ENCODE measurements at regions of chr5 and their contacts with region 1.

Region 1: DNA sequence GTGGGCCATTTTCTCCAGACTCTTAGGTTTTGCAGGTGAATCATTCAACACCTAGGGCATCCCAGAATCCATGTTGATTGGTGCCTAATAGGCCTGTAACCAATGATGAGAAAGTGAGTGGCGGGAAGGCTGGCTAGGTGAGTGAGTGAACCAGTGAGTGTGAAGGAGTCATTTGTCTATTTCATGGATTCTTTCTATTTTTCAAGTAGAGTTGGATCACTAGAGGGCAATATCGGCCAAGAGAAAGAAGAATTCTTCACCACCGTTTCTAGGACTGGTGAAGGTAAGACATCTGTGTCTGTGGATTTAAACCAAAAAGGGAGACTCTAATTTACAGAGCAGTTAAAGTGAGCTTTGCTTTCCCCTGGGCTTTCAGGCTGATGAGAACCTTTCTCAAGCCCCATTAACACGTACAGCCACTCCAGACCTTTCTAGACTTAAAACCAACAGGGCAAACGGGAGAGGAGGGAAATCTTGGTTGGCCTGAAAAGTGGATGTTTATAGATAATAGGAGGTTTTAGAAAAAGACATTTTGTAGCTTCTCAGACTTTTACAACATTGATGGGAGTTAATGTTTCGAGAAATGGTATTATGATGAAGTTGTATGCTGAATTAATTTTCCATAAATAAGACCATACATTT is 114.3 kb upstream of the IL12B start:
- DNase-seq: no peak
- ATAC-seq: peak; percentile 56
- H3K4me3 ChIP-seq: no peak overlapping the region
- H3K27ac ChIP-seq: no peak overlapping the region
- H3K4me1 ChIP-seq: no peaks in the 10 kb centered on the region
- H3K27me3 ChIP-seq: no peaks in the 10 kb centered on the region
- CTCF ChIP-seq: peak; percentile 3 to 65 (median 27); a peak in 3 of 6 replicates
- EP300 ChIP-seq: no peak
- POLR2A ChIP-seq: no peak
- RAD21 ChIP-seq: peak; percentile 77

Region 2: GRCh38 chr5:159061179-159061796 is 383.3 kb before region 1 on chr5:
- CTCF ChIA-PET with region 1: no interaction called
- POLR2A ChIA-PET with region 1: no interaction called
- RAD21 ChIA-PET with region 1: no interaction called
- SMC1A ChIA-PET with region 1: no interaction called
- in situ Hi-C with region 1: no loop called
- intact Hi-C with region 1: no loop called
- DNase-seq: no peak
- ATAC-seq: peak; percentile 39
- H3K4me3 ChIP-seq: no peak overlapping the region
- H3K27ac ChIP-seq: no peak overlapping the region
- H3K4me1 ChIP-seq: peaks cover 12% of the 10 kb centered on the region; the same call in 1 of the 2 replicates
- H3K27me3 ChIP-seq: no peaks in the 10 kb centered on the region
- CTCF ChIP-seq: no peak
- EP300 ChIP-seq: no peak
- POLR2A ChIP-seq: no peak
- RAD21 ChIP-seq: no peak

Region 3: GRCh38 chr5:159149085-159149484 is 295.5 kb before region 1 on chr5:
- CTCF ChIA-PET with region 1: no interaction called
- POLR2A ChIA-PET with region 1: no interaction called
- RAD21 ChIA-PET with region 1: no interaction called
- SMC1A ChIA-PET with region 1: no interaction called
- in situ Hi-C with region 1: no loop called
- intact Hi-C with region 1: no loop called
- DNase-seq: no peak
- ATAC-seq: no peak
- H3K4me3 ChIP-seq: no peak overlapping the region
- H3K27ac ChIP-seq: no peak overlapping the region
- H3K4me1 ChIP-seq: no peaks in the 10 kb centered on the region
- H3K27me3 ChIP-seq: no peaks in the 10 kb centered on the region
- CTCF ChIP-seq: no peak
- EP300 ChIP-seq: no peak
- POLR2A ChIP-seq: no peak
- RAD21 ChIP-seq: no peak

Region 4: DNA sequence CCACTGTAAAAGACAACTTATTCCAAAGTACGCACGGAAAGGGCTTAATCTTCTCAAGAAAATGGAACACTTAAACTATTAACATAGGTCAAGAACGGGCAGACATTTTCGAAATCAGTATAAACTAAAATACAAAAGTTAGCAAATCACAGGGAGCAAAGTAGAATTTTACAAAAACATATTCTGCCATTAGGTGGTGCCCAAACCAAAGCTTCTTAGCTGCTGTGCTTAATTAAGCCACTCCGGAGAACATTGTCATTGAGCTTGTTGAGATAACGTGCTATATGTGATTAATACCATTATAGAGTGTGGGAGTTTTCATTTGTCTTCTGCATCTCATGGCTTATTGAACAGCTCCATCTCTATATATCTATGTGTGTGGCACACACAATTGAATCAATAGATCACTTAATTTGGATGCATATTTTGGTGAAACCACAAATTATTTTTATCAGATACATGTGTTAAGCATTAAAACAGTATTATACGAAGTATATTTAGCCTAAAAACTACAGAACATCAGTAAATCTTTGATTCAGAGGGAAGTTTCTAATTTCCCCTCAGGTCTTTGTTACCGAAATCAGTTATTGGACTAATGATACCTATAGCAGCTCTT is 158.0 kb before region 1 on chr5:
- CTCF ChIA-PET with region 1: interaction called, 5 read pairs
- POLR2A ChIA-PET with region 1: no interaction called
- RAD21 ChIA-PET with region 1: no interaction called
- SMC1A ChIA-PET with region 1: interaction called, 6 read pairs
- in situ Hi-C with region 1: no loop called
- intact Hi-C with region 1: loop called (anchors 1 kb)
- DNase-seq: no peak
- ATAC-seq: peak; percentile 56
- H3K4me3 ChIP-seq: no peak overlapping the region
- H3K27ac ChIP-seq: no peak overlapping the region
- H3K4me1 ChIP-seq: no peaks in the 10 kb centered on the region
- H3K27me3 ChIP-seq: no peaks in the 10 kb centered on the region
- CTCF ChIP-seq: peak; percentile 30 to 52 (median 36); a peak in 4 of 6 replicates
- EP300 ChIP-seq: no peak
- POLR2A ChIP-seq: no peak
- RAD21 ChIP-seq: peak; percentile 70

Region 5: DNA sequence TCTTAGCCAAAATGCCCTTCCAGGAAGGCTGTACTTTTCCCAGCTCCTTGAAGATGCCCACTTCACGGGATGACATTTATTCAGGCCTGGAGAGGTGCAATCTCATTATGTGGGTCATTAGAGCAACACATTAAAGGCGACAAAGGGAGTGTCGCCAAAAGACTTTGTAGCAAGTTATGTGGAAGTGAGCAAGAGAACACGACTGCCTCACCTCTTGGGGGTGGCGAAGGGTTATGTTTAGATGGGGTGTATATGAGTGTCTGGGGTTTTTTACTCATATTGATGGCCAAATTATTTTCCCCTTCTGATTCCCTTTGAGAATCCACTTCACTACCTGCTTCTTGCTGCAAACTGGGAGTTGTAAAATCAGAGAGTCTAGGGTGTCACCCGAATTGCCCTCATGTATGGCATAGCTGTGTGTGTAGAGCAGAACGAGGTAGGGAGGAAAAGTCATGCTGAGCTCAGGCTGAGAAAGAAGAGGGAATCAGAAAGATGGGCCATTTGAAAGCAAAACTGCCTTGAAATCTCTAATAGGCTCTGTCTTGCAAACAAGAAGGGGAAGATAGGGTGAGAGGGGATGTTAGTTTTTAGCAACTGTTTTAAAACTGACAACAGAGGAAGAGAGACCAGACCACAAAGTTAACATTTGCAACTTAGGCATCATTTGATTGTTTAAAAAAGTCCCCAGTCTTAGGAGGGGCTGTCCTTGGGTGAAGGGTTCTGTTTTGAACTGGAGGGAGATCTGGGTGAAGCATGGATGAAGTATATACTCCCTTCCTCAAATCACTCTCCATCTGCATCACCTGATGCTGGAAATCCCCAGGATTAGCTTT is 17.2 kb before region 1 on chr5:
- CTCF ChIA-PET with region 1: interaction called, 9 read pairs
- POLR2A ChIA-PET with region 1: interaction called, 3 read pairs
- RAD21 ChIA-PET with region 1: interaction called, 3 read pairs
- SMC1A ChIA-PET with region 1: interaction called, 33 read pairs
- in situ Hi-C with region 1: no loop called
- intact Hi-C with region 1: no loop called
- DNase-seq: peak; percentile 73
- ATAC-seq: peak; percentile 79
- H3K4me3 ChIP-seq: peak overlapping the region; percentile 38; the same call in 1 of the 2 replicates
- H3K27ac ChIP-seq: peak overlapping the region; percentile 10; the same call in 1 of the 2 replicates
- H3K4me1 ChIP-seq: peaks cover 48% of the 10 kb centered on the region
- H3K27me3 ChIP-seq: no peaks in the 10 kb centered on the region
- CTCF ChIP-seq: no peak
- EP300 ChIP-seq: peak; percentile 68 to 82; a peak in 3 of 4 replicates
- POLR2A ChIP-seq: no peak
- RAD21 ChIP-seq: 0 out of 2 replicates have a peak, but pooled peaks have one; percentile 8

Region 6: GRCh38 chr5:159456722-159457465 is 12.3 kb after region 1 on chr5:
- CTCF ChIA-PET with region 1: interaction called, 42 read pairs
- POLR2A ChIA-PET with region 1: interaction called, 3 read pairs
- RAD21 ChIA-PET with region 1: interaction called, 34 read pairs
- SMC1A ChIA-PET with region 1: interaction called, 25 read pairs
- in situ Hi-C with region 1: no loop called
- intact Hi-C with region 1: no loop called
- DNase-seq: peak; percentile 96
- ATAC-seq: peak; percentile 70
- H3K4me3 ChIP-seq: peak overlapping the region; percentile 14; the same call in 1 of the 2 replicates
- H3K27ac ChIP-seq: peak overlapping the region; percentile 41
- H3K4me1 ChIP-seq: peaks cover 58% of the 10 kb centered on the region
- H3K27me3 ChIP-seq: no peaks in the 10 kb centered on the region
- CTCF ChIP-seq: no peak
- EP300 ChIP-seq: peak; percentile 97
- POLR2A ChIP-seq: no peak
- RAD21 ChIP-seq: no peak

Region 7: DNA sequence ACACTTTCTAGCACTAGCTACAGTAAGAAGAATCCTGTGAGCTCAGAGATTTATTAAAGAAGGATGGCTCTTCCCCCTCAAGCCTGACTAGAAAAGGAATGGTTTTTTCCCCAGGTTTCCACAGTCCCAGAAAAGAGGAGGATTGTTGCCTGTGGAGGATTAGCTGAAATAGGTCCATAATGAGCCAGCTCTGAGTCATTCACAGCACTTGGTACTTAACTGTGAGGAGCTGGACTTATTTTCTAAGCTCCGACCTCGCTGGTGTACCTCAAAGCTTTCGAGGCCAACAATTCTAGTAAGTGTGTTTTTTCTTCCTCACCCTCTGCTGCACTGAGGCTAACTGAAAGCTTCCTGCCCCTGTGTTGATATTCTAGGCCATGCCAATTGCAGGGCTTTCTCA is 108.2 kb after region 1 on chr5:
- CTCF ChIA-PET with region 1: no interaction called
- POLR2A ChIA-PET with region 1: no interaction called
- RAD21 ChIA-PET with region 1: no interaction called
- SMC1A ChIA-PET with region 1: no interaction called
- in situ Hi-C with region 1: no loop called
- intact Hi-C with region 1: no loop called
- DNase-seq: no peak
- ATAC-seq: no peak
- H3K4me3 ChIP-seq: no peak overlapping the region
- H3K27ac ChIP-seq: no peak overlapping the region
- H3K4me1 ChIP-seq: no peaks in the 10 kb centered on the region
- H3K27me3 ChIP-seq: no peaks in the 10 kb centered on the region
- CTCF ChIP-seq: no peak
- EP300 ChIP-seq: no peak
- POLR2A ChIP-seq: no peak
- RAD21 ChIP-seq: no peak

Region 8: DNA sequence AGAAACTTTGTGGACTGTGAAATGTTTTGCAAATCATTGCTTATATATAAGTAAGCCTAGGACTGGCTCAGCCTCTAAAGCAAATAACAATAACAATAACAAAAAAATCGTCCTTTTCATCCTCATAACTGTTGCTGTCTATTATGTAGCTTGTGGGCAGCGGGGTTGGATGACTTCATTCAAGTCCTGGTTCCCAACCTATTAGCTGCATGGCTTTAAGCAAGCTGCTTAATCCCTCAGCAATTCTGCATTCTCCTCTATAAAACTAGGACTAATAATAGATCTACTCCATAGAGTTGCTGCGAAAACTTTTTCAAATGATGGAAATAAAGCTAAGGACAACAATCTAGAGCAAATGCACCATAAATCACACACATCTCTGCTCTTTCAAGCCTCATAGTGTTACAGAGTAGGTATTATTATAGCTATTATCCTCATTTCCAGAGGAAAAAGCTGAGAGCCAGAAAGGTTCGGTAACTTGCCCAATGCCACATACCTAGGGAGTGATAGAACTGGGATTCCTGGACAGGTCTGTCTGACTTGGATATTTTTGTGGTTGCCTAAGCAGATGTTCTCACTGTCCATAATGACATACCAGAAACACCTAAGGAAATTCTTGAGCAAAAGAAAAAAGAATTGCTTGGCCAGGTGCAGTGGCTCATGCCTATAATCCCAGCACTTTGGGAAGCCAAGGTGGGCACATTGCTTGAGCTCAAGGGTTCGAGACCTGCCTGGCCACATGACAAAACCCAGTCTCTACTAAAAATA is 372.9 kb after region 1 on chr5:
- CTCF ChIA-PET with region 1: no interaction called
- POLR2A ChIA-PET with region 1: no interaction called
- RAD21 ChIA-PET with region 1: no interaction called
- SMC1A ChIA-PET with region 1: no interaction called
- in situ Hi-C with region 1: no loop called
- intact Hi-C with region 1: no loop called
- DNase-seq: no peak
- ATAC-seq: no peak
- H3K4me3 ChIP-seq: no peak overlapping the region
- H3K27ac ChIP-seq: no peak overlapping the region
- H3K4me1 ChIP-seq: no peaks in the 10 kb centered on the region
- H3K27me3 ChIP-seq: no peaks in the 10 kb centered on the region; a peak in 1 of 4 replicates
- CTCF ChIP-seq: no peak
- EP300 ChIP-seq: no peak
- POLR2A ChIP-seq: no peak
- RAD21 ChIP-seq: no peak

Region 9: DNA sequence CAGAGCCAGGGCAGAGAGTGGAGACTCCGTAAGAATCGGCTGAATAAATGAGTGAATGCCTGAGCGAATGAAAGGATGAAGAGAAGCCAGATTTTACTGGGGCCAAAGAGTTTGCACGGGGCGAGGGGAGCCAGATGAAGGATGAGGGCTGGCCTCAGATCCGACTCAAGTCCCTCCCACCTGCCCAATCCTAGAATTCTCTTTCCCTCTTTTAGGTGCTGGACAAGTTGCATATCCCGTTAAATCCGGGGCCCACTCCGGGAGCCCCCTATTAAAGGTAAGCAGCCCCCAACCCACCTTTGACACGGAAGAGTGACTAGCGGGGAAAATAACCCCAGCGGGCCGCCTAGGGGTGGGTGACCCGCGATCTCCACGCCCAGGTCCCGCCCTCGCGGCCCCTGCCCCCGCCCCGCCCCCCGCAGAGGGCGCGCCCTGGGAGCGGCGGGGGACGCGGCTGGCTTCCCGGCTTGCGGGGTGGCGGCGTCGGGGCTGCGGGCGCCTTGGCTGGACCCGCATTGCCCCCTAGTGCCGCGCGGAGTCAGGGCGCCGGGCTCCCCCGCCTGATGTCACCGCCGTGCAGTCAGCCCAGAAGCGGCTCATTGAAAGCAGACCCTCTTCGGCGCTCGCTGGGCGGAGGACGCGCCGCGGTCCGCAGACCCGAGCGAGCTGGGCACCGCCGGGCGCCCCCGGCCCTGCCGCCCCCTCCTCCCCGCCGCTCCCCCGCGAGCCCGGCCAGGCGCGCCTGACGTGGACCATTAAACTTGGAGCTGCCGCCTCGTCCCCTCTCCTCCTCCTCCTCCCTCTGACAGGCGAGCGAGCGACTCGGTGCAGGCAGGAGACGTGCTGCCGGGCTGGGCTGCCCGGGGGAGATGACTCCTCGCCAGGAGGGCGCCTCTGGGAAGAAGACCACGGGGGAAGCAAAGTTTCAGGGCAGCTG is 471.6 kb after region 1 on chr5 and contains the start of gene ADRA1B:
- CTCF ChIA-PET with region 1: interaction called, 8 read pairs
- POLR2A ChIA-PET with region 1: no interaction called
- RAD21 ChIA-PET with region 1: interaction called, 3 read pairs
- SMC1A ChIA-PET with region 1: interaction called, 3 read pairs
- in situ Hi-C with region 1: loop called (anchors 10 kb)
- intact Hi-C with region 1: loop called (anchors 1 kb)
- DNase-seq: no peak
- ATAC-seq: peak; percentile 97
- H3K4me3 ChIP-seq: no peak within 1 kb of the TSS
- H3K27ac ChIP-seq: no peak within 1 kb of the TSS
- H3K4me1 ChIP-seq: no peaks in the 10 kb centered on the region
- H3K27me3 ChIP-seq: peaks cover 6 to 10% of the 10 kb centered on the region in 2 experiments
- CTCF ChIP-seq: peak; percentile 28 to 66 (median 49); a peak in 4 of 6 replicates
- EP300 ChIP-seq: no peak
- POLR2A ChIP-seq: no peak
- RAD21 ChIP-seq: peak; percentile 37
- polyA plus RNA-seq, gene ADRA1B: not detected

Region 10: GRCh38 chr5:159965031-159965837 is 520.7 kb after region 1 on chr5:
- CTCF ChIA-PET with region 1: interaction called, 9 read pairs
- POLR2A ChIA-PET with region 1: no interaction called
- RAD21 ChIA-PET with region 1: interaction called, 4 read pairs
- SMC1A ChIA-PET with region 1: interaction called, 4 read pairs
- in situ Hi-C with region 1: no loop called
- intact Hi-C with region 1: loop called (anchors 1 kb)
- DNase-seq: no peak
- ATAC-seq: peak; percentile 91
- H3K4me3 ChIP-seq: no peak overlapping the region
- H3K27ac ChIP-seq: no peak overlapping the region
- H3K4me1 ChIP-seq: no peaks in the 10 kb centered on the region
- H3K27me3 ChIP-seq: 0 out of 4 replicates have a peak, but pooled peaks cover 0 to 4% of the 10 kb centered on the region in 2 experiments
- CTCF ChIP-seq: peak; percentile 45 to 68 (median 59)
- EP300 ChIP-seq: no peak
- POLR2A ChIP-seq: no peak
- RAD21 ChIP-seq: peak; percentile 58

Region 11: DNA sequence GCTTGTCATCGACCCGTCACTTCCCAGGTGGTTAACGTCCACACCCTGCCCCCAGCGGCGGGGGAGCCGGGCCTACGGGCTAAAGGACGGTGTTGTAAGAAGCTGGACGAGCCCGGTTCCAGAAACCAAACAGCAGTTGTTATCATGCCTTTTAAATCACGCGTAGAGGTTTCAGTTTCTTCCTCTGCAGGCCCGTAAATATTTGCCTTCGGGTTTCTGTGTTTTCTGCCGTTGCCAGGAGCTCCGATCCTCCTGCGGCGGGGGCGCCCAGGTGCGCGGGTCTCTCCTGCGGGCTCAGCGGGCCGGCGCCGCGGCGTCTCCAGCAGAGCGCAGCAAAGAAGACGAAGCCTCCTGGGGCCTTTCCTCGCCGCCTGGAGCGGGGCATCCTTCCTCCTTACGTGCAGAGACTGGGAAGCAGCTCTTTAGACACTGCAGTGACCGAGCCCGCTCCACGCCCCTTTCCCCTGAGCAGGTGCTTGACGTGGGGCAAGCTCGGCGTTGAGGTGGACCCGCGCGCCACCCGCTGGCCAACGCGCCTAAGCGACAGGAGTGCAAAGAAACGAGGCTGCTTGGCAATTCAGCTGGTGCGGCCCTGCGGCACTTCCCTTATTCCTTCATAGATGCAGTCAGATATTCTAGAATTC is 542.6 kb after region 1 on chr5:
- CTCF ChIA-PET with region 1: interaction called, 29 read pairs
- POLR2A ChIA-PET with region 1: no interaction called
- RAD21 ChIA-PET with region 1: interaction called, 7 read pairs
- SMC1A ChIA-PET with region 1: interaction called, 5 read pairs
- in situ Hi-C with region 1: loop called (anchors 5 kb)
- intact Hi-C with region 1: loop called (anchors 1 kb)
- DNase-seq: peak; percentile 8
- ATAC-seq: peak; percentile 99
- H3K4me3 ChIP-seq: peak overlapping the region; percentile 58; the same call in 1 of the 2 replicates
- H3K27ac ChIP-seq: no peak overlapping the region
- H3K4me1 ChIP-seq: no peaks in the 10 kb centered on the region
- H3K27me3 ChIP-seq: peaks cover 3 to 4% of the 10 kb centered on the region in 2 experiments
- CTCF ChIP-seq: peak; percentile 77 to 86 (median 80)
- EP300 ChIP-seq: no peak
- POLR2A ChIP-seq: no peak
- RAD21 ChIP-seq: peak; percentile 75